ENCODE measurements at regions of chr7 and their contacts with region 1.

Region 1: GRCh38 chr7:114663502-114663901 is 248.9 kb downstream of the FOXP2 start:
- DNase-seq: no peak
- H3K4me3 ChIP-seq: no peak overlapping the region
- H3K27ac ChIP-seq: no peak overlapping the region
- H3K4me1 ChIP-seq: peaks cover 0 to 48% (median 47%) of the 10 kb centered on the region in 4 donors
- H3K27me3 ChIP-seq: no peaks in the 10 kb centered on the region
- CTCF ChIP-seq: peak; percentile 42 to 53 (median 44)
- EP300 ChIP-seq: no peak
- POLR2A ChIP-seq: no peak

Region 2: DNA sequence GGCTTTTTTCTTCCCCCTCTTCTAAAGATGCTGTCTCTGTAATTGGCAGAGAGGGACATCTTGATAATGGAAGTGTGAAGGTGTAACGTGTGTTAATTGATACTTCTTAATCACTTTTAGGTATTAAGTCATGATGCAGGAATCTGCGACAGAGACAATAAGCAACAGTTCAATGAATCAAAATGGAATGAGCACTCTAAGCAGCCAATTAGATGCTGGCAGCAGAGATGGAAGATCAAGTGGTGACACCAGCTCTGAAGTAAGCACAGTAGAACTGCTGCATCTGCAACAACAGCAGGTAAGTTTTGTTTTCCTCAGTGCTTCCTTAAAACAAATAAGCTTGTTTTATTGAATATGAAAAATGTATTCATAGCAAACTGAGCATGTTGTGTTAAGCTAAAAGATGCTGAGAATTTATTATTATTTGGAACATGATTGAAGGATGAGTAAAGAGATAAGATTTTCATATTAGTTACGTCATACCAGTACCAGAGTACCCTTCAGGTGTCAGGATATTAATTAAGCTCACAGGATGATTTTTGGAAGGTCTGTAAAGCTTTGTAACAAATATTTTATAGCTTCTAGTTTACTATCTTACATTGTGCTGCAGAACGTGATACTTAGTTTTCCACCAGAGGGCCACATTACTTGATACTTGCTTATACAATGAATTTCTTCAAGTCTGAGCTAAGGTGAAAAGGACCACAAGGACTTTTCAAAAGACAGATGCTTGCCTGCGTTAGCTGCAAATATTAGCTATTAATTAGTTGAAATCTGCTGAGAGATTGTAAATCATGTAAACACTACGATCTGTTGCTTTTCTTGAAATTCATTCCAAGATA is 236.9 kb before region 1 on chr7:
- intact Hi-C with region 1: loop called (anchors 5 kb)
- DNase-seq: no peak
- H3K4me3 ChIP-seq: no peak overlapping the region
- H3K27ac ChIP-seq: no peak overlapping the region
- H3K4me1 ChIP-seq: peaks cover 0 to 61% (median 49%) of the 10 kb centered on the region in 4 donors
- H3K27me3 ChIP-seq: no peaks in the 10 kb centered on the region
- CTCF ChIP-seq: peak; percentile 47 to 53 (median 53)
- EP300 ChIP-seq: no peak
- POLR2A ChIP-seq: no peak